ENCODE measurements at regions of chr7 and their contacts with region 1.

Region 1: GRCh38 chr7:128135515-128136214 is 104.4 kb upstream of the LRRC4 start:
- DNase-seq: peak; percentile 63
- ATAC-seq: peak; percentile 94
- H3K4me3 Mint-ChIP-seq: peak overlapping the region; percentile 61
- H3K27ac Mint-ChIP-seq: no peak overlapping the region
- H3K4me1 Mint-ChIP-seq: peaks cover 15% of the 10 kb centered on the region
- H3K27me3 Mint-ChIP-seq: peaks cover 48% of the 10 kb centered on the region

Region 2: GRCh38 chr7:127682140-127682539 is 453.5 kb before region 1 on chr7:
- CTCF ChIA-PET with region 1: no interaction called
- DNase-seq: no peak
- ATAC-seq: no peak
- H3K4me3 Mint-ChIP-seq: no peak overlapping the region
- H3K27ac Mint-ChIP-seq: peak overlapping the region; percentile 11
- H3K4me1 Mint-ChIP-seq: peaks cover 31% of the 10 kb centered on the region
- H3K27me3 Mint-ChIP-seq: no peaks in the 10 kb centered on the region

Region 3: GRCh38 chr7:128031901-128032604 is 103.6 kb before region 1 on chr7:
- CTCF ChIA-PET with region 1: interaction called, 10 read pairs
- DNase-seq: peak; percentile 67
- ATAC-seq: peak; percentile 94
- H3K4me3 Mint-ChIP-seq: peak overlapping the region; percentile 69
- H3K27ac Mint-ChIP-seq: no peak overlapping the region
- H3K4me1 Mint-ChIP-seq: peaks cover 2% of the 10 kb centered on the region
- H3K27me3 Mint-ChIP-seq: peaks cover 20% of the 10 kb centered on the region

Region 4: GRCh38 chr7:128154504-128154903 is 18.8 kb after region 1 on chr7:
- CTCF ChIA-PET with region 1: interaction called, 13 read pairs
- DNase-seq: no peak
- ATAC-seq: no peak
- H3K4me3 Mint-ChIP-seq: no peak overlapping the region
- H3K27ac Mint-ChIP-seq: no peak overlapping the region
- H3K4me1 Mint-ChIP-seq: peaks cover 2% of the 10 kb centered on the region
- H3K27me3 Mint-ChIP-seq: peaks cover 30% of the 10 kb centered on the region

Region 5: DNA sequence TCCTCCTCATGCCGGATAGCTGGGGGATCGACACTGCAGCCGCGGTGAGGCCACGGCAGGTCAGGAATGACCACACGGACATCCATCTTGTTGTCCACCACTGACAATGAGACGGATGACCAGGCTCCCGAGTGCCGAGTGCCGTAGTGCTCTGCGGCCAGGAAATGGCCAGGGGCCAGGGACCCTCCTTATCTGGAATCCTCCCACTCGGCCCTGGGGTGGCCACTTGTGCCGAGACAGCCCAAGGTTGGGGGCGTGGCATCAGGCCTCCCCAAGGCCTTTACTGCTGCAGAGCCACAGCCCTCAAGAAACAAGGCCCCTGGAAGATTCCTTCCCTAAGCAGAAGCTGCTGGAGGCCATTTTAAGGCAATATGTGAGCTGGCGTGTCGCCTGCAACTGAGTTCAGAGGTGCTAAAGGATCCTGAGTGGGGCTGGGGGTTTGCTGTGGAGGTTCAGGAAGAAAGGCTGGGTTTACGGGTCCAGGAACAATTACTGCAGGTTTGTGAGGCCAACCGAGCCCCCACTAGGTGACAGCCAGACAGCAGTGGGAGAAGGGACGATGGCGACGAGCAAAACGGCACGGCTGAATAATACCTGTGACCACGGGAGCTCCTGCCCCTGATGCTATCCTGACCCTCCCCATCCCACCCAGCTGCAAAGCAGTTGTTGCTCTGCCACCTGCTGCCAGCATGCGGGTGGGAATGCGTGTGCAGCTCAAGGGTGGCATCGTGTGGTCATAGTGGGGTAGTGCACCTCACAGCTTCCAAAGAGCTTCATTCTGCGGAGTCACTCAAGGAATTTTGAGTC is 73.8 kb after region 1 on chr7:
- CTCF ChIA-PET with region 1: interaction called, 136 read pairs
- DNase-seq: peak; percentile 72
- ATAC-seq: peak; percentile 79
- H3K4me3 Mint-ChIP-seq: no peak overlapping the region
- H3K27ac Mint-ChIP-seq: no peak overlapping the region
- H3K4me1 Mint-ChIP-seq: no peaks in the 10 kb centered on the region
- H3K27me3 Mint-ChIP-seq: peaks cover 10% of the 10 kb centered on the region

Region 6: DNA sequence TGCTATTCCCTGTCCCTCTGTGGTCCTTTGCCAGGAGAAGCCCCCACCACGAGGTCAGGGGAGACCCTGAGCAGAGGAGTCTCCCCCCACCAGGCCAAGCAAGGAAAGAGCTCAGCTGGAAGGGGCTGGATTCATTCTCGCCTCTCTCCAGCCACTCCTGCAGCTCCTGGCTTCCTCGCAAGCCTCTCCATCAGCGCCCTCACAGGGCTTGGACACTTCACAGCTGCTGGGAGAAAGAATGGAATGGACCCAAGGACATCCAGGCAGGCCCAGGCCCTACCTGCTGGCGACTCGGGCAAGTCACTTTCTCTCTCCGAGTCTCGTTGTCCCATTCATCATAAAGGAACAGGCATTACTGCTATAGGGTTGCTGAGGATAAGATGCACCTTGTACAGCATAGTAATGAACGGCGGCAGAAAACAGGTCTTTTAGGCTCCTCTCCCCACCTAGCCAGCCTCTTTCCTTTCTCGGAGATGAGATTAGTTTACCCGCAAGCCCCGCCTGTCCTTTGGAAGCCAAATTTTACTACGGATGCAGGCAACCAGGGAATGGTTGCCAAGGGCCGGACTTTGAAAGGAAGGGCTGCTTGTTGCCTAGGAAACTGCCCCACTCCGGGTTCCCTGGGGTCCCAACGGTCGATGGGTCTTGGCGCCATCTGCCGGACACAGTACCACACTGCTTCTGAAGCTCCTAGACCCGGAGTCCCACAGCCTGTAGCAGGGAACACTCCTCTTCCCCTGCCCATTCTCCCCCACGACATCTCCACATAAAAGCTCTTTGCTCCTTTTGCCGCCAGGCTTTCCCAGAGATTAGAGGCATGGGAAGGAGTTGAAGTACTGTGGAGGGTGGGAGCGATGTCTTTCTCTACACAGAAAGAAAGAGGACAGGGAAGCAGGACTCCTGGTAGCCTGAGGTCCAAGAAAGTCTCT is 251.8 kb after region 1 on chr7:
- CTCF ChIA-PET with region 1: interaction called, 14 read pairs
- DNase-seq: peak; percentile 77
- ATAC-seq: peak; percentile 94
- H3K4me3 Mint-ChIP-seq: no peak overlapping the region
- H3K27ac Mint-ChIP-seq: no peak overlapping the region
- H3K4me1 Mint-ChIP-seq: no peaks in the 10 kb centered on the region
- H3K27me3 Mint-ChIP-seq: no peaks in the 10 kb centered on the region

Measured in activated CD8-positive, alpha-beta memory T cell treated with anti-CD3 and anti-CD28 coated beads, Interleukin-2, amount 10 ng/mL, durations not matched to agents 7 days and 5 days (primary cell).